ENCODE measurements at regions of chr1 and their contacts with region 1.

Region 1: GRCh38 chr1:24847995-24848881 is 81.8 kb downstream of the RUNX3 start:
- DNase-seq: peak; percentile 91
- H3K4me3 ChIP-seq: peak overlapping the region; percentile 37 to 55; a peak in 3 of 4 replicates
- H3K27ac ChIP-seq: no peak overlapping the region
- H3K4me1 ChIP-seq: peaks cover 0 to 10% of the 10 kb centered on the region in 2 experiments; a peak in 1 of 4 replicates
- H3K27me3 ChIP-seq: no peaks in the 10 kb centered on the region
- CTCF ChIP-seq: peak; percentile 86
- EP300 ChIP-seq: no peak
- RAD21 ChIP-seq: peak; percentile 88

Region 2: GRCh38 chr1:24861821-24862727 is 13.8 kb after region 1 on chr1:
- CTCF ChIA-PET with region 1: interaction called, 13 read pairs
- POLR2A ChIA-PET with region 1: no interaction called
- DNase-seq: no peak
- H3K4me3 ChIP-seq: no peak overlapping the region
- H3K27ac ChIP-seq: no peak overlapping the region
- H3K4me1 ChIP-seq: no peaks in the 10 kb centered on the region
- H3K27me3 ChIP-seq: no peaks in the 10 kb centered on the region
- CTCF ChIP-seq: no peak
- EP300 ChIP-seq: no peak
- RAD21 ChIP-seq: no peak

Region 3: DNA sequence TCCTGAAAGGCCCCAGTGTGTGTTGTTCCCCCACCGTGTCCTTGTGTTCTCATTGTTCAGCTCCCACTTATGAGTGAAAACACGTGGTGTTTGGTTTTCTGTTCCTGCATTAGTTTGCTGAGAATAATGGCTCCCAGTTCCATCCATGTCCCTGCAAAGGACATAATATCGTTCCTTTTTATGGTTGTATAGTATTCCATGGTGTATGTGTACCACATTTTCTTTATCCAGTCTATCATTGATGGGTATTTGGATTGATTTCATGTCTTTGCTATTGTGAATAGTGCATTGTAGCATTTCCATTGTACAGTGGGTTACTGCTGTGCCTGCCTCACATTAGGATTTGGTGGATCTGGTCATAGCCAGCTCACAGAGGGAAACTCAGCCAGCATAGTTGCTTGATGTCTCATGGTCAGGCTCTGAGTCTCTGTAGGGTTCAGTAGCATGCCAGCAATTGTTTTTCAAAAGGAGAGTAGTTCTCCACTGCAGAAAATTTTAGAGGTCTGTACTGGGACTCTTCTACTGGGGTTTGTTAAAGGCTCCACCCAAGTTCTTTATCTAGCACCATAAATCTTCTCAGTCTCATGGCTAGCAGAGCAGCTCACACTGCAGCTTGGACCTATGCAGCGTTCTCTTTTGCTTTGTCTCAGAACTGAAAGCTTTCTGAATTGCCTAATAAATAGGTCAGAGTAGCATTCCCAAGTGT is 40.9 kb after region 1 on chr1:
- CTCF ChIA-PET with region 1: interaction called, 13 read pairs
- POLR2A ChIA-PET with region 1: no interaction called
- DNase-seq: no peak
- H3K4me3 ChIP-seq: no peak overlapping the region
- H3K27ac ChIP-seq: no peak overlapping the region
- H3K4me1 ChIP-seq: no peaks in the 10 kb centered on the region
- H3K27me3 ChIP-seq: no peaks in the 10 kb centered on the region
- CTCF ChIP-seq: no peak
- EP300 ChIP-seq: no peak
- RAD21 ChIP-seq: no peak

Region 4: DNA sequence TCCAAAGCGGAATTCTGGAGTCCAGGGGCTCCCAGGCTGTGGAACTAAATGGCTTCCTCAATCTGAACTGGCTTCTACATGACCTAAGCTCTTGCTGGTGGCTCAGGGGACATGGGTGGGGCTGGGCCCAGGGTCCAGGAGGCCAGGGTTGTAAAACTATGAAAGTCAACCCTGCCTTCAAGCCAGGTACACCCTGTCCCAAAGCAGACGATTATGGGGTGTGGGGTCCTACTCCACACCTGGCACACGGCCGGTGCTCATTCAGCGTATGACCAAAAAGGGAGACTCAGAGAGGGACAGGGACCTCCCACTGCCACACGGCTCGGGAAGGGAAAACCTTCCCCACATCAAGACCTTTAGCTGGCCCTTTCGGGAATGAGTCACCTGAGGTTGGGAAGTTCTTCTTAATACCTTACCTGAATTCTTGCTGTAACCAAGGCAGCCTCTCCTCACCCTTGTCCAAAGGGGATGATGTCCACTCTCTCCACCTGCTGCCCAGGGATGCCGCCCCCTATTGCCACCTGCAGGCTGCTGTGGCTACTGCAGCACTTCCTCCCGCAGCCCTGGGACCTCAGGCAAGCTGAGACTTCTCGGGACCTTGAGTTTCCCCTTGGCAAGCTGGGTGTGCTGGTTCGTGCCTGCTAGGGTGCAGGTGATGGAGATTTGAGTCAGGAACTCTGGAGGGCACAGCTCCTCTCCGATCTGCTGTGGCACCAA is 49.7 kb after region 1 on chr1:
- CTCF ChIA-PET with region 1: interaction called, 36 read pairs
- POLR2A ChIA-PET with region 1: no interaction called
- DNase-seq: peak; percentile 87
- H3K4me3 ChIP-seq: no peak overlapping the region
- H3K27ac ChIP-seq: no peak overlapping the region
- H3K4me1 ChIP-seq: peaks cover 0 to 2% of the 10 kb centered on the region in 2 experiments; a peak in 1 of 4 replicates
- H3K27me3 ChIP-seq: no peaks in the 10 kb centered on the region; the same call in 1 of the 2 replicates
- CTCF ChIP-seq: peak; percentile 81
- EP300 ChIP-seq: no peak
- RAD21 ChIP-seq: peak; percentile 65

Region 5: GRCh38 chr1:24910751-24911650 is 62.8 kb after region 1 on chr1:
- CTCF ChIA-PET with region 1: interaction called, 13 read pairs
- POLR2A ChIA-PET with region 1: no interaction called
- DNase-seq: no peak
- H3K4me3 ChIP-seq: no peak overlapping the region
- H3K27ac ChIP-seq: no peak overlapping the region
- H3K4me1 ChIP-seq: peaks cover 0 to 30% of the 10 kb centered on the region in 2 experiments; a peak in 1 of 4 replicates
- H3K27me3 ChIP-seq: no peaks in the 10 kb centered on the region
- CTCF ChIP-seq: no peak
- EP300 ChIP-seq: no peak
- RAD21 ChIP-seq: no peak

Region 6: GRCh38 chr1:25099343-25099951 is 251.2 kb after region 1 on chr1:
- CTCF ChIA-PET with region 1: interaction called, 38 read pairs
- POLR2A ChIA-PET with region 1: no interaction called
- DNase-seq: peak; percentile 80
- H3K4me3 ChIP-seq: no peak overlapping the region
- H3K27ac ChIP-seq: peak overlapping the region in 1 of 2 experiments; percentile 92; a peak in 2 of 4 replicates
- H3K4me1 ChIP-seq: peaks cover 0 to 35% of the 10 kb centered on the region in 2 experiments; a peak in 2 of 4 replicates
- H3K27me3 ChIP-seq: peaks cover 17% of the 10 kb centered on the region; the same call in 1 of the 2 replicates
- CTCF ChIP-seq: no peak
- EP300 ChIP-seq: peak in 1 of 2 experiments; percentile 65; a peak in 1 of 4 replicates
- RAD21 ChIP-seq: no peak

Region 7: GRCh38 chr1:25204797-25205480 is 356.7 kb after region 1 on chr1:
- CTCF ChIA-PET with region 1: interaction called, 78 read pairs
- POLR2A ChIA-PET with region 1: no interaction called
- DNase-seq: peak; percentile 72
- H3K4me3 ChIP-seq: peak overlapping the region in 1 of 2 experiments; percentile 32; a peak in 1 of 4 replicates
- H3K27ac ChIP-seq: no peak overlapping the region
- H3K4me1 ChIP-seq: no peaks in the 10 kb centered on the region; a peak in 1 of 4 replicates
- H3K27me3 ChIP-seq: no peaks in the 10 kb centered on the region; the same call in 1 of the 2 replicates
- CTCF ChIP-seq: peak; percentile 85
- EP300 ChIP-seq: no peak
- RAD21 ChIP-seq: peak; percentile 75